ENCODE measurements at regions of chr2 and their contacts with region 1.

Region 1: GRCh38 chr2:190511104-190511503 is 23.4 kb downstream of the NEMP2 start:
- DNase-seq: no peak
- H3K4me3 ChIP-seq: no peak overlapping the region
- H3K27ac ChIP-seq: no peak overlapping the region
- H3K4me1 ChIP-seq: no peaks in the 10 kb centered on the region
- H3K27me3 ChIP-seq: no peaks in the 10 kb centered on the region
- CTCF ChIP-seq: peak; percentile 67

Region 2: GRCh38 chr2:189952536-189953109 is 558.5 kb before region 1 on chr2:
- CTCF ChIA-PET with region 1: no interaction called
- POLR2A ChIA-PET with region 1: no interaction called
- intact Hi-C with region 1: no loop called
- DNase-seq: no peak
- H3K4me3 ChIP-seq: no peak overlapping the region
- H3K27ac ChIP-seq: no peak overlapping the region
- H3K4me1 ChIP-seq: no peaks in the 10 kb centered on the region
- H3K27me3 ChIP-seq: no peaks in the 10 kb centered on the region
- CTCF ChIP-seq: no peak

Region 3: DNA sequence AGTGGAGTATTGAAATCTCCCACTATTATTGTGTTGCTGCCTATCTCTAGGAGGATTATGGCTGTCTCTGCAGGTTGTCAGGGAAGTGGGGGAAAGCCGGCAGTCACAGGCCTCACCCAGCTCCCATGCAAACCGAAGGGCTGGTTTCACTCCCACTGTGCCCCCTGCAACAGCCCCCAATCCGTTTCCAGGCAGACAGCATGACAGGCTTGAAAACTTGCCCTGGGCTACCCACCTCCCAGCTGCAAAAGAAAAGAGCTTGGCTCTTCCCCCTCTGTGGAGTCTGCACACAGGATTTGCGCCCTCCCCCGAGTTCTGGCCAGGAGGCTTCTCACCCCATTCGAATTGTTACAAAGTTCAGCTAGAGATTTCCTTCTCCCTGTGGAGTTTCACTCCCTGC is 361.2 kb before region 1 on chr2:
- CTCF ChIA-PET with region 1: no interaction called
- POLR2A ChIA-PET with region 1: no interaction called
- intact Hi-C with region 1: no loop called
- DNase-seq: no peak
- H3K4me3 ChIP-seq: no peak overlapping the region
- H3K27ac ChIP-seq: no peak overlapping the region
- H3K4me1 ChIP-seq: no peaks in the 10 kb centered on the region
- H3K27me3 ChIP-seq: no peaks in the 10 kb centered on the region
- CTCF ChIP-seq: no peak

Region 4: GRCh38 chr2:190382851-190383250 is 128.3 kb before region 1 on chr2:
- CTCF ChIA-PET with region 1: interaction called, 3 read pairs
- POLR2A ChIA-PET with region 1: no interaction called
- intact Hi-C with region 1: loop called (anchors 1 kb)
- DNase-seq: peak; percentile 17 to 59
- H3K4me3 ChIP-seq: no peak overlapping the region
- H3K27ac ChIP-seq: no peak overlapping the region
- H3K4me1 ChIP-seq: no peaks in the 10 kb centered on the region
- H3K27me3 ChIP-seq: no peaks in the 10 kb centered on the region
- CTCF ChIP-seq: peak; percentile 63

Region 5: DNA sequence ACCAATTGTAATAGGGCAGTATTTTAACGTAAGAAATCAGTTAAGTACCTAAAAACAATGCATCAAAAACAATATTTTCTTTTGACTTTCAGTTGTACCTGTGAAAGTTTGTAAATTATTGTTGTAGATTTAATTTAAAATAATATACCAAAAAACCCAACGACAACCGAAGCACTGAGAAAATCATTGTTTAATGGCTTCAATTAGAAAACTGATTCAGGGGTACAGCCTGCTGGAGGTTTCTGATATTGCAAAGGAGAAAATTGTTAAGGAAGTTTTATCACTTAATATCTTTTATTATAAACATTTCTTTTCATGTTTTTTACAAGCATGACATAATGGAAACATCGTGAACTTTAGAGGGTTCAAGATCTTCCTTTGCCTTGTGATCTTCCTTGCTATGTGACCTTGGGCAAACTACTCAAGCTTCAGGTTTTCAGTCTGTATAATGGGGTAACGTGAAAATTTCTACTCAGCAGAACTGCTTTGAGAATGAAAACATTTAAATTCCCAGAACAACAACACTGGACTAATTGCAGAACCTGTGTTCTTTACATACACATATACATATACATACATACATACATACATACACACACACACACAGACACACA is 293.2 kb after region 1 on chr2:
- CTCF ChIA-PET with region 1: no interaction called
- POLR2A ChIA-PET with region 1: no interaction called
- intact Hi-C with region 1: loop called (anchors 10 kb)
- DNase-seq: no peak
- H3K4me3 ChIP-seq: no peak overlapping the region
- H3K27ac ChIP-seq: no peak overlapping the region
- H3K4me1 ChIP-seq: no peaks in the 10 kb centered on the region
- H3K27me3 ChIP-seq: no peaks in the 10 kb centered on the region
- CTCF ChIP-seq: peak; percentile 71